Activated CD8-positive, alpha-beta T cell treated with anti-CD3 and anti-CD28 coated beads for 36 hours (primary cell): ENCODE measurements at regions of chr6 and their contacts with region 1.

Region 1: DNA sequence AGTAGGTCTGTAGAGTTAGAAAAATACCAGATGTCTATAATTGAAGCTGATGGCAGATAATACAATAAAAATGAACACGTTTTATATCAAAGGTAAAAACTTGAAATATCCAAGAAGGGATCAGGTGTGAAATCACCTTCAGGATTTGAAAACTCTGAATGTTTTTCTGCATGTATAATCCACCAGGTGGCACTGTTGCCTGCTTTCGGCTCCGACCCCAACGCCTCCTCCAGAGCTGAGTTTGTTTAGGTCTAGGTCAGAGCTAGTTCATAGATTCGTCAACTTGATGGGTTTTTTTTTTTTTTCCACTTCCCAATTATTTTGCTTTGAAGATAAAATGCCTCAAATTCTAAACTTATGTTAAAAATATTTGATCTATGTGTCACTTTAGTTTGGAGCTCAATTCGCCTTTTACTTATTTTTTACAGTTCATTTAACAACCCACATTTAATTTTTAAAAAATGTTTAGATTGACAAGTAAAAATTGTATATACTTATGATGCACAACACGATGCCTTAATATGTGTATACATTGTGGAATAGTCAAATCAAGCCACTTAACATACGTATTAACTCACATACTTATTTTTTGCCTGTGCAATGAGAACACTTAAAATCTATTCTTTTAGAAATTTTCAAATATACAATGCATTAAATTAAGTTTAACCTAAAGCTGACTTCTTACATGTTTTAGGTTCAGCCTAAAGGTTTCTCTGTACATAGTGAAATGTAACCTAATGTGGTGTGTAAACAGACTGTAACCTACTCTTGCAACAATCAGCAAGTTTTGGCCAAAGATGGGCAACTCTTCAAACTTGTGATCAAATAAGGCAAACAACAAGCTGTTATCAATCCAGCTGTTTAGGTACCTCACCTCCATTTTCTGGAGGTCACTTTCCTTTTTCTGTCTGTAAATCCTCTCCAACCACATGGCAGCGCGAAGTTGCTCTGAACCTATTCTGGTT is 39.4 kb upstream of the ENPP4 start:
- DNase-seq: peak; percentile 76
- ATAC-seq: peak; percentile 70
- H3K4me3 Mint-ChIP-seq: no peak overlapping the region
- H3K27ac Mint-ChIP-seq: no peak overlapping the region
- H3K4me1 Mint-ChIP-seq: peaks cover 4% of the 10 kb centered on the region
- H3K27me3 Mint-ChIP-seq: peaks cover 24% of the 10 kb centered on the region
- CTCF ChIP-seq: peak; percentile 84

Region 2: DNA sequence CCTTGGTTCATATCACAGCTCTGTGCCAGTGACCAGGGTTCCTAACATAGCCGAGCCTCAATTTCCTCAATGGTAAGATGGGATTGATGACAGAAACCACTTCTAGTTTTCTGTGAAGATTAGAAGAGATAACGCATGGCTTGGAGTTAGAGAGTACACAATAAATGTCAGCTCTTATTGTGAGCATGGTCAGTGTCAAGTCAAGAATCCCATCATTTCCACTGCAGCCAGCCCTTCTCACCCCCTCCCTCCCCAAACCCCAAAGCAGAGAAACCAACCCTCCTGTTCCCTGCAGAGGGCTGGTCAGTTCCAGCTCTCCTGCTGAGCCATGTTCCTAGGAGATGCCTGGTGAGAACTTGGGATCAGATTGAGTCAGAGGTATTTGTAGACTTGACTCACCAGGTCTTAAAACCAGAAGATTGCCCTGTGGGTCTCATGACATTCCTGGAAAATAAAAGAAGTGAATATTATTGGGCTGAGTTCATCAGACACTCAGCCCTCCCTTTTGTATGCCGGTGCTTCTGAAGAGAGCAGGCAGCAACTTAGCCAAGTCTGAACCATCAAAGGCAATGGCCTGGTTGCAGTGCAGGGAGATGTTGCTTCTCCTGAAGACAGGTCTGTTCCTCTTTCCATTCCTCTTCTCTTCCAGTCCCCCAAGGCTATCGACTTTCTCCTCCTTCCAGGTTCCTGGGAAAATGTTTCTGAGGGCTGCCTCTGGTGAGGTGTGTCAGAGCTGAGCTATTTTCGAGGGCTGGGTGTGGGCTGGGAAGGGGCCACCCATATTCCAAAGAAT is 434.6 kb before region 1 on chr6:
- CTCF ChIA-PET with region 1: no interaction called
- POLR2A ChIA-PET with region 1: no interaction called
- intact Hi-C with region 1: no loop called
- DNase-seq: no peak
- ATAC-seq: no peak
- H3K4me3 Mint-ChIP-seq: no peak overlapping the region
- H3K27ac Mint-ChIP-seq: no peak overlapping the region
- H3K4me1 Mint-ChIP-seq: peaks cover 14% of the 10 kb centered on the region
- H3K27me3 Mint-ChIP-seq: peaks cover 6% of the 10 kb centered on the region
- CTCF ChIP-seq: no peak

Region 3: DNA sequence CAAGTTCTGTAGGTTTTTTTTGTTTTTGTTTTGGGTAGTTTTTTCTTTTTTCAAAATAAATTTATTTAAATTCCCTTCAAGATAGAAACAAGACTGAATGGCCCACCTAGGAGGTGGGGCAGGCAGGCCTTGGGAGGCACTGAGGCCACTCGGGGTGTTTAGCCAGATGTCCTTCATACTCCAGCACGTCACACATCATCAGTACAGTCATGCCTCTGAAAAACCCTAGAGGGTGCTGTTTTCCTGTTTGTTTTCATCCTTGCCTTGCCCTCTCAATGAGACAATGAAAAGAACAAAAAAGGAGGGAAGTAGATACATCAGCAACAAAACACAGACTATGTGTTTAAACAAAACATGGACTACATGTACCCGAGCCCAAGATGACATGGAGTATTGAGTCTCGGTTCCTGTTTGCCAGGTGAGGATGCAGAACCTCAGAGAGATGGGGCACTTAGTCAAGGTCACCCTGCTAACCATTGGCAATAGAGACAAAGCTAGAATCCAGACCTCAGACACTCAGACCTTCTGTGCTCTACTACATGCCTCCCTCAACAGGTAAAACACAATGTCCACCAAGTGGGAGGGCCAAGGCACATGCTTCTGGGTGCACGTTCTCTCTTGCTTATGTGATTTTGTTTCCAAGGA is 47.9 kb before region 1 on chr6:
- CTCF ChIA-PET with region 1: interaction called, 11 read pairs
- POLR2A ChIA-PET with region 1: no interaction called
- intact Hi-C with region 1: no loop called
- DNase-seq: peak; percentile 28
- ATAC-seq: peak; percentile 87
- H3K4me3 Mint-ChIP-seq: no peak overlapping the region
- H3K27ac Mint-ChIP-seq: no peak overlapping the region
- H3K4me1 Mint-ChIP-seq: peaks cover 6% of the 10 kb centered on the region
- H3K27me3 Mint-ChIP-seq: peaks cover 1% of the 10 kb centered on the region
- CTCF ChIP-seq: peak; percentile 64

Region 4: DNA sequence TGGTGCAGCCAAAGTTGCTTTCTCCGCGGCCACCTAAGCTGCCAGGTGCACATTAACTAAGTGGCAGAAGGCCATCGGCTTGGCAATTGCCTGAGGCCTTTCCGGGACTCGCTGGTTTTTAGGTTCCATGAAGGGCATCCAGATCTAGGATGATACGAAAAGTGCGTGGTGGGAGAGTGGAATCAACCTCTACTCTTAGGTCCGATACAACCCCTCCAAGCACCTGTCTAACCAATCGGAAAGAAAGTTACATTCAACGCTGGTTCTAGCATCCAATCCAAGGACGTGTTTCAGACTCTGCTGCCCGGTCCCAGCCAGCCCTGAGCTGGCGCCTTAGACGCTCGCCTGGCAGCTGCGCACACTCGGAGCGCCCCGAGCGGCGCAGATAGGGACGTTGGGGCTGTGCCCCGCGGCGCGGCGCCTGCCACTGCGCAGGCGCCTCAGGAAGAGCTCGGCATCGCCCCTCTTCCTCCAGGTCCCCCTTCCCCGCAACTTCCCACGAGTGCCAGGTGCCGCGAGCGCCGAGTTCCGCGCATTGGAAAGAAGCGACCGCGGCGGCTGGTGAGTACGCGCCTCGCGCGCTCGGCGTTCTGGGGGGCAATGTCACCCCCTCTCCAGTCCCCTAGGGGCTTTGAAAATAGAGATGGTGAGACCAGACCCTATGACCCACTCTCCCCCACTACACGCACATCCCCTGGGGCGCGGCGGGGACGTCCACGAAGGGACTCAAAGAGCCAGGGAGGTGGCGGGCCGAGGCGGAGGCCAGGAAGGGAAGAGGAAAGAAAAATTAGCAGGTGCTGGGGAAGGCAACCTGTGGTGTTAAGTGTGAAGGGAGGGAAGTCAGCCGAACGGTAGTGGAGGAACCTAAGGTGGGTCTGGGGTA is 39.5 kb after region 1 on chr6 and contains the start of gene ENPP4:
- CTCF ChIA-PET with region 1: interaction called, 15 read pairs
- POLR2A ChIA-PET with region 1: no interaction called
- intact Hi-C with region 1: no loop called
- DNase-seq: peak; percentile 88
- ATAC-seq: peak; percentile 100
- H3K4me3 Mint-ChIP-seq: peak within 1 kb of the TSS; percentile 92
- H3K27ac Mint-ChIP-seq: peak within 1 kb of the TSS; percentile 92
- H3K4me1 Mint-ChIP-seq: peaks cover 35% of the 10 kb centered on the region
- H3K27me3 Mint-ChIP-seq: no peaks in the 10 kb centered on the region
- CTCF ChIP-seq: no peak
- total RNA-seq, gene ENPP4: 6.6 to 7.3 TPM

Region 5: DNA sequence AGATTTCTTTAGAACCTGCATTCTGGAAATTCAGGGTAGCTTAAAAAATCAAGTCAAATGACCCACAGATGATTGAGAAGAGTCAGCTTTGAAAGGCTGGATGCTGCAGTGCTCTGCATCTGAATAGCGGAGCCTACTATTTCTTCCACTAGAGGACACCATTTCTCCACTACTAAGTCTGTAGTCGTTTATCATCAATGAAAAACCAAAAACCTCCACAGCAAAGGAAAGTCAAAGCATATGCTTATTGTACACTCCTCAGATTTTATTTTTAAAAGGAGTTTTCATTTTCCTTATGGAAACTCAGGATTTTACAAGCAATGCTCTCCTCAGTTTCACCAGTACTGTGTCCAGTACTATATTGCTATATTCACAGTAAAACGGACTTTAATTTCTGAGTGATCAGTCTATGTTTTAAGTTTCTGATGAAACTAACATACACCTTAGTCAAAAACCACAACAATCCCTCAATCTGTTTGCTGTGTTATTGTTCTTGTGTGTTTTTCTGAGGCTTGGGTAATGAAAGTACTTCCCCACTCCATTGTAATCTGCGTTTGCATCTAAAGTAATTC is 130.9 kb after region 1 on chr6:
- CTCF ChIA-PET with region 1: interaction called, 21 read pairs
- POLR2A ChIA-PET with region 1: no interaction called
- intact Hi-C with region 1: no loop called
- DNase-seq: peak; percentile 3
- ATAC-seq: peak; percentile 57
- H3K4me3 Mint-ChIP-seq: no peak overlapping the region
- H3K27ac Mint-ChIP-seq: peak overlapping the region; percentile 83
- H3K4me1 Mint-ChIP-seq: peaks cover 21% of the 10 kb centered on the region
- H3K27me3 Mint-ChIP-seq: no peaks in the 10 kb centered on the region
- CTCF ChIP-seq: peak; percentile 74

Region 6: DNA sequence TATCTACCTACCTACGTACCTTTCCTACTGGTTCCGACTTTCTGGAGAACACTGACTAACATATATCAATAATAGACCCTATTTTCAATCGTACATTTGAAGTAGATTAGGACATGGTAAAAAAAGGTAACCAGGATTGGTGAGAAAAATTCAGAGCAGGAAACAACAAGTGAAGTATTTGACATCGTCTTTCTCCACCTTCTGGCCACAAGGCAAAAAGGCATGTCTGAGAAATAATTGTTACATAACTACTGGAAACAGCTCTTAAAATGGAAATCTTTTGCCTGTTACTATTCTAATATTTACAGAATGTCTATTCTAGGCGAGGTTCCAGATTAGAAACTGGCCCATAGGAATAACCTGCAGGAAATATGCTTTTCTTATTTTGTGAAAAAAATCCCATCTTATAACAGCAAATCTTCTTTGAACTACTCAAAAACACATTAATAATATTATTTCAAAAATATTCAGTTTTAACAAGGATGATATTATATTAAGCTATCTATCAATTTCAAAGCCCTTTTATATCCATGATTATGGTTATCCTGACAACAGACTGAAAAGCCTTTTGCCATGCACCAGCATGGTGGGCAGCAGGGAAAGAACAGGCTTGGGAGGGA is 320.0 kb after region 1 on chr6:
- CTCF ChIA-PET with region 1: interaction called, 55 read pairs
- POLR2A ChIA-PET with region 1: no interaction called
- intact Hi-C with region 1: loop called (anchors 2 kb)
- DNase-seq: peak; percentile 14
- ATAC-seq: no peak
- H3K4me3 Mint-ChIP-seq: no peak overlapping the region
- H3K27ac Mint-ChIP-seq: no peak overlapping the region
- H3K4me1 Mint-ChIP-seq: no peaks in the 10 kb centered on the region
- H3K27me3 Mint-ChIP-seq: peaks cover 1% of the 10 kb centered on the region
- CTCF ChIP-seq: peak; percentile 82